ENCODE measurements at regions of chr16 and their contacts with region 1.

Region 1: GRCh38 chr16:84952335-84953189 is 58.8 kb downstream of the ZDHHC7 start:
- DNase-seq: peak; percentile 39
- ATAC-seq: peak; percentile 93
- H3K4me3 Mint-ChIP-seq: no peak overlapping the region
- H3K27ac Mint-ChIP-seq: no peak overlapping the region
- H3K4me1 Mint-ChIP-seq: peaks cover 5% of the 10 kb centered on the region
- H3K27me3 Mint-ChIP-seq: peaks cover 12% of the 10 kb centered on the region
- CTCF ChIP-seq: peak; percentile 40

Region 2: DNA sequence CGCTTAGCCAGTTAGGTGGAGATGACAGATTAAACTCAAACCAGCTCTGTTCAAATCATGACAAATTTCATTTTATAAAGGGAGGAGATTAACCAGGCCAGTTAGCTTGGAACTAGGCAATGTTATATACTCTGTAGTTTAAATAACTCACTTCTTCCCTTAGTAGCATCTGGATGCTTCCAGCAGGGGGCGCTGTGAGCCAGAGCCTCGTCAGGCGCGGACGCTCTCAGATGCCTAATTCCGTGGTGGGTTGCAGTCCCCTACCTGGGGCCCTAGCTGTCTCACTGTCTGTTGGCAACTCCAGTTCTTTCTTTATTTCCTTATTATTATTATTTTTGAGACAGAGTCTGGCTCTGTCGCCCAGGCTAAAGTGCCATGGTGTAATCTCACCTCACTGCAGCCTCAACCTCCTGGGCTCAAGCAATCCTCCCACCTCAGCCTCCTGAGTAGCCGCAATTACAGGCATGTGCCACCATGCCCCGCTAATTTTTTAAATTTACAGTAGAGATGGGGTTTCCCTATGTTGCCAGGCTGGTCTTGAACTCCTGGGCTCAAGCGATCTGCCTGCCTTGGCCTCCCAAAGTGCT is 675.2 kb before region 1 on chr16:
- CTCF ChIA-PET with region 1: no interaction called
- POLR2A ChIA-PET with region 1: no interaction called
- intact Hi-C with region 1: loop called (anchors 2 kb)
- DNase-seq: peak; percentile 38
- ATAC-seq: no peak
- H3K4me3 Mint-ChIP-seq: no peak overlapping the region
- H3K27ac Mint-ChIP-seq: no peak overlapping the region
- H3K4me1 Mint-ChIP-seq: no peaks in the 10 kb centered on the region
- H3K27me3 Mint-ChIP-seq: peaks cover 2% of the 10 kb centered on the region
- CTCF ChIP-seq: peak; percentile 61

Region 3: DNA sequence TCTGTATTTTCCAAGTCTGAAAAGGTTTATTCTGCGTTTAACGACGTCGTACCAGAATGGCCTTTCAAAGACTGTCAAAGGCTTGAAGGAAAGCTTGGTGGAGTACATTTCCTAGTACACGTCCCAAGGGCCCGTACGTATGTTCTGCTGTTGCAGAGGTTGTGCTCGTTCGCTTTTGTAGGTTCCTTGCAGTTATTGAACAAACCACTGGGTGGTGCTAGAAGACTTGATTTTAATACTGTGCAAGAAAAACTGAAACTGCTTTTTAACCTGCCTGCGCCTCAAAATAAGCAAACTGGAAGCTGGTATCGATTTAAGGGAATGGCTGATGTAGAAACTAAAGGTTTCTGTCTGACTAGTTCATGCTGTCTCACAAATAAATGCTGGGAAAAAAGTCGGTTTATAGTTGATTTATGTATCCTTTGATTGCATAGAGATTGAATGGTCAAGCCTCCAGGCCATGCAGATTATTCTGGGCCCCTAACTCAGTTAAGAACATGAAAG is 198.2 kb before region 1 on chr16:
- CTCF ChIA-PET with region 1: interaction called, 46 read pairs
- POLR2A ChIA-PET with region 1: no interaction called
- intact Hi-C with region 1: loop called (anchors 1 kb)
- DNase-seq: no peak
- ATAC-seq: peak; percentile 86
- H3K4me3 Mint-ChIP-seq: no peak overlapping the region
- H3K27ac Mint-ChIP-seq: no peak overlapping the region
- H3K4me1 Mint-ChIP-seq: peaks cover 67% of the 10 kb centered on the region
- H3K27me3 Mint-ChIP-seq: no peaks in the 10 kb centered on the region
- CTCF ChIP-seq: peak; percentile 77

Region 4: DNA sequence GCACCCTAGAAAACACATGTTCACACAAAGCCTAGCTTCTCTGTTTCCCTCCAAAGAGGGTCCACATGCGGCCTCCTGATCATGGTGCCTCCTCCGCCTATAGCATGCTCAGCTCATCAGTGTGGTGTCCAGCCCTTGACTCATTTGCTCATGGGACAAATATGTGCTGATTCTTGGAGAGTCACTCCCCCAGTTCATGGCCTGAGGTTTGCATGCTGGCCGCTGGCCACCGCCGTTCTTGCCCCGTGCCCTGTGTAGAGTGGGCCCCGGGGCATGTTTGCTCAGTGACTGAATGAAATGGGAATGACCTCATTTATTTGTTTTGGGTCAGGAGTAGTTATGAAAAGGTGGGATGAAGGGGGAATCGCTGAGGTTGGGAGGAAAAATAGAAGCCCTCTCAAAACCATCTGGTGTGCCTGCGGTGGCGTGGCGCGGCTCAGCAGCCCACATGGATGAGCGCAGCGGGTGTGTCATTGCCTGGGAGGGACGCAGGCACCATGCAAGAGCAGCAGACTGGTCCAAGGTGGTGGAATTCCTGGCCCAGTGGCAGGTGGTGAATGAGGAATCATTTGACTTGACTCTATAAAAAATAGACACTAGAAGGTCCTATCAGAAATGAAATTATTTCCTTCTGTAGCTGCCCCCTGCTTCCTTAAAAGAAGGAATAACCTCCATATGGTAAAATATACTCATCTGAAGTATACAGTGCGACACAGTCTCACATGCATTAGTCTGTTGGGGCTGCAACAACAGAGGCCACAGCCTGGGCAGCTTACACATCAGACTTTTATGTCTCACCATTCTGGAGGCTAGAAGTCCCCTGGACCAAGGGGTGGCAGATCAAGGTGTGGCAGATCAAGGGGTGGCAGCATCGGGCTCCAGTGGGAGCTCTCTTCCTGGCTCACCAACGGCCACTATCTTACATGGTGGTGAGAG is 101.1 kb before region 1 on chr16:
- CTCF ChIA-PET with region 1: no interaction called
- POLR2A ChIA-PET with region 1: no interaction called
- intact Hi-C with region 1: no loop called
- DNase-seq: no peak
- ATAC-seq: no peak
- H3K4me3 Mint-ChIP-seq: no peak overlapping the region
- H3K27ac Mint-ChIP-seq: no peak overlapping the region
- H3K4me1 Mint-ChIP-seq: no peaks in the 10 kb centered on the region
- H3K27me3 Mint-ChIP-seq: peaks cover 11% of the 10 kb centered on the region
- CTCF ChIP-seq: no peak

Region 5: DNA sequence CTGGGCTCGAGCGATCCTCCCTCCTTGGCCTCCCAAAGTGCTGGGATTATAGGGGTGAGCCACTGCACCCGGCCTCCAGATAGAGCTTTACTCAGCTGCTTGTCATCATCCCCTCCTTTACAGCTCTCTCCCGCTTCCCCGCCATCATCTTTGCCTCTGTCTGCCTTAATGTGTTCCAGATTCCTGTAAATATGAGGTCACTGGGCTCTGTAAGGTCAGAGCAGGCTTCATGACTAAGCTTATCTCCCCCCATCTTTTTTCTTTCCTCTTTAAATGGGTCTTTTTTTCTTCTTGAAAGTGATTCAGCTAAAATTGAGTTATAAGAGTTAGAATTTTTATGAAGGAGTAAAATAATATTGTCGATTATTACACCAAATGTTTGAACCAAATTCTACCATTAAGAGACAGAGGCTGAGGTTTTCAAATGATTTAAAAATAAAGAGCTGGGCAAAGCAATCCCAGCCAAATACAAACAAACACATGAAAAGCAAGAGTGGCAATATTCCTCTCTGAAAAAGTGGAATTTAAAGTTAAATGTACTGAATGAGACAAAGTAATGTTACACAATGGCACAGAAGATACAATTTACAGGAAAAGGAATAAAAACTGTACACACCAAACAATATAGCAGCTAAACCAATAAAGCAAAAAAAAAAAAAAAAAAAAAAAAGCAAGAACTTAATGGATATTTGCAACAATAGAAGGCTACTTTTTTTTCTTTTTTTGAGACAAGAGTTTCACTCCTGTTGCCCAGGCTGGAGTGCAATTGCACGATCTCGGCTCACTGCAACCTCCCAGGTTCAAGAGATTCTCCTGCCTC is 70.7 kb before region 1 on chr16:
- CTCF ChIA-PET with region 1: no interaction called
- POLR2A ChIA-PET with region 1: no interaction called
- intact Hi-C with region 1: no loop called
- DNase-seq: no peak
- ATAC-seq: no peak
- H3K4me3 Mint-ChIP-seq: no peak overlapping the region
- H3K27ac Mint-ChIP-seq: no peak overlapping the region
- H3K4me1 Mint-ChIP-seq: peaks cover 2% of the 10 kb centered on the region
- H3K27me3 Mint-ChIP-seq: peaks cover 26% of the 10 kb centered on the region
- CTCF ChIP-seq: no peak

Region 6: GRCh38 chr16:84913315-84913714 is 39.2 kb before region 1 on chr16:
- CTCF ChIA-PET with region 1: no interaction called
- POLR2A ChIA-PET with region 1: no interaction called
- intact Hi-C with region 1: no loop called
- DNase-seq: no peak
- ATAC-seq: no peak
- H3K4me3 Mint-ChIP-seq: no peak overlapping the region
- H3K27ac Mint-ChIP-seq: no peak overlapping the region
- H3K4me1 Mint-ChIP-seq: no peaks in the 10 kb centered on the region
- H3K27me3 Mint-ChIP-seq: peaks cover 20% of the 10 kb centered on the region
- CTCF ChIP-seq: no peak

Region 7: DNA sequence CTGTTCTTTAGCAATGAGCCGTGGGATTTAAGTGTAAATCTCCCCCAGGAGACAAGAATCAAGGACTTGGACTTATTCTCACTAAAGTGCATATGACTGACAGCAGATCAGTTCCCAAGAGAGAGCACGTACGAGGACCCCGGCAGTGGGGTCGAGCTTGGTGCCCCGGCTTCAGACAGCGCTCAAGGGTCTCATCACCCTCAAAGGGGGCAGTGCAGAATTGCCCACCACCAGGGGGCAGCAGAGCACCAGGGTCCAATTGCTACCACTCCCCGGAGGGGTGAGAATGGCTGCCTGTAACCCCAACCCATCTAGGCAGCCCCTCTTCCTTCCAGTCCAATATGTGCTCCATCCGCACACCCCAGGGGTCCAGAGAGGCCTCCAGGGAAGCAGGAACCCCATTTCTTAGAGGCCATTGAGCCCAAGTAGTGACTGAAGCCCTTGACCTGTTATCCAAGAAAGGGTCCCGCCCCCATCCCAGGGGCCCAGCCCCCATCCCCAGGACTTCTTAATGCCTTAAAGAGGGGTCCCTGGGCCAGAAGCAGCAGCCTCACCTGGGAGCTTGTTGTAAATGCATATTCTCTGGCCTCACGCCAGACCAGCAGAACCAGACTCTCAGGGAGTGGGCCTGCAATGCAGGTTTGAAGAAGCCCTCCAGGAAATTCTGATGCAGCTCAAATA is 27.3 kb before region 1 on chr16:
- CTCF ChIA-PET with region 1: interaction called, 7 read pairs
- POLR2A ChIA-PET with region 1: no interaction called
- intact Hi-C with region 1: loop called (anchors 1 kb)
- DNase-seq: peak; percentile 62
- ATAC-seq: no peak
- H3K4me3 Mint-ChIP-seq: no peak overlapping the region
- H3K27ac Mint-ChIP-seq: no peak overlapping the region
- H3K4me1 Mint-ChIP-seq: no peaks in the 10 kb centered on the region
- H3K27me3 Mint-ChIP-seq: peaks cover 3% of the 10 kb centered on the region
- CTCF ChIP-seq: no peak

Region 8: GRCh38 chr16:84970447-84971127 is 18.0 kb after region 1 on chr16:
- CTCF ChIA-PET with region 1: interaction called, 33 read pairs
- POLR2A ChIA-PET with region 1: no interaction called
- intact Hi-C with region 1: no loop called
- DNase-seq: peak; percentile 65
- ATAC-seq: peak; percentile 81
- H3K4me3 Mint-ChIP-seq: no peak overlapping the region
- H3K27ac Mint-ChIP-seq: no peak overlapping the region
- H3K4me1 Mint-ChIP-seq: peaks cover 4% of the 10 kb centered on the region
- H3K27me3 Mint-ChIP-seq: peaks cover 3% of the 10 kb centered on the region
- CTCF ChIP-seq: peak; percentile 53

Region 9: GRCh38 chr16:85104821-85105391 is 152.3 kb after region 1 on chr16:
- CTCF ChIA-PET with region 1: no interaction called
- POLR2A ChIA-PET with region 1: no interaction called
- intact Hi-C with region 1: no loop called
- DNase-seq: no peak
- ATAC-seq: peak; percentile 64
- H3K4me3 Mint-ChIP-seq: peak overlapping the region; percentile 1
- H3K27ac Mint-ChIP-seq: peak overlapping the region; percentile 66
- H3K4me1 Mint-ChIP-seq: peaks cover 14% of the 10 kb centered on the region
- H3K27me3 Mint-ChIP-seq: no peaks in the 10 kb centered on the region
- CTCF ChIP-seq: no peak

Measured in activated B cell treated with CpG ODN at 0.5 μM for 24 hours (primary cell).